ENCODE measurements at regions of chrX and their contacts with region 1.

Region 1: GRCh38 chrX:136694431-136695087 is 46.6 kb downstream of the CD40LG start:
- DNase-seq: peak; percentile 8
- ATAC-seq: peak; percentile 69
- H3K4me3 ChIP-seq: no peak overlapping the region
- H3K27ac ChIP-seq: no peak overlapping the region
- H3K4me1 ChIP-seq: no peaks in the 10 kb centered on the region
- H3K27me3 ChIP-seq: no peaks in the 10 kb centered on the region
- CTCF ChIP-seq: peak; percentile 40 to 60 (median 42); a peak in 5 of 6 replicates
- POLR2A ChIP-seq: no peak
- RAD21 ChIP-seq: peak; percentile 75

Region 2: GRCh38 chrX:136162831-136163570 is 531.6 kb before region 1 on chrX:
- CTCF ChIA-PET with region 1: no interaction called
- POLR2A ChIA-PET with region 1: no interaction called
- RAD21 ChIA-PET with region 1: no interaction called
- intact Hi-C with region 1: loop called (anchors 10 kb)
- DNase-seq: peak; percentile 23
- ATAC-seq: peak; percentile 99
- H3K4me3 ChIP-seq: no peak overlapping the region
- H3K27ac ChIP-seq: no peak overlapping the region
- H3K4me1 ChIP-seq: peaks cover 0 to 16% of the 10 kb centered on the region in 2 experiments; a peak in 1 of 4 replicates
- H3K27me3 ChIP-seq: no peaks in the 10 kb centered on the region
- CTCF ChIP-seq: peak; percentile 39 to 72 (median 54); a peak in 5 of 6 replicates
- POLR2A ChIP-seq: no peak
- RAD21 ChIP-seq: peak; percentile 64

Region 3: DNA sequence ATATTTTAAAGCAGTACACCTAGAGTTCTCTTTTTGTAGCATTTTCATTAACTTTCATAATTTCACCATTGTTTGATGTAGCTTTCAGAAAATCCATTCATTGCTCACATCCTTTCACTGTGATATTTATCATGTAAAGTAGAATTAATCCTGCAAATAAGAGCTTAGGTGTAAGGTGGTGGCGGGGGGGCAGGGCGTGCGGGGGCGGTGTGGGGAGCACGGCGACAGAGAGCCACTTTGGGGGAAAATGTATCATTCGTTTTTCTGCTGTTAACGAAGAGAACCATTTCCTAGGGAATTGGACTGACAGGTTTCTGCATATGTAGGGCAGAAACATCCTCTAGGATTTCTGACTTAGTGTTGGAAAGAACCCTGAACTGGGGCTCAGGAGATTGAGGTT is 289.4 kb before region 1 on chrX:
- CTCF ChIA-PET with region 1: no interaction called
- POLR2A ChIA-PET with region 1: no interaction called
- RAD21 ChIA-PET with region 1: no interaction called
- intact Hi-C with region 1: loop called (anchors 10 kb)
- DNase-seq: no peak
- ATAC-seq: no peak
- H3K4me3 ChIP-seq: no peak overlapping the region
- H3K27ac ChIP-seq: no peak overlapping the region
- H3K4me1 ChIP-seq: no peaks in the 10 kb centered on the region
- H3K27me3 ChIP-seq: no peaks in the 10 kb centered on the region
- CTCF ChIP-seq: no peak
- POLR2A ChIP-seq: no peak
- RAD21 ChIP-seq: no peak

Region 4: GRCh38 chrX:136608295-136609171 is 86.0 kb before region 1 on chrX:
- CTCF ChIA-PET with region 1: interaction called, 29 read pairs
- POLR2A ChIA-PET with region 1: no interaction called
- RAD21 ChIA-PET with region 1: interaction called, 3 to 6 read pairs
- intact Hi-C with region 1: loop called (anchors 1 kb)
- DNase-seq: peak; percentile 3
- ATAC-seq: peak; percentile 68
- H3K4me3 ChIP-seq: no peak overlapping the region
- H3K27ac ChIP-seq: no peak overlapping the region
- H3K4me1 ChIP-seq: no peaks in the 10 kb centered on the region
- H3K27me3 ChIP-seq: no peaks in the 10 kb centered on the region
- CTCF ChIP-seq: peak; percentile 20 to 36 (median 21); a peak in 4 of 6 replicates
- POLR2A ChIP-seq: no peak
- RAD21 ChIP-seq: peak; percentile 62

Region 5: GRCh38 chrX:136714626-136715599 is 20.4 kb after region 1 on chrX:
- CTCF ChIA-PET with region 1: no interaction called
- POLR2A ChIA-PET with region 1: no interaction called
- RAD21 ChIA-PET with region 1: no interaction called
- intact Hi-C with region 1: no loop called
- DNase-seq: no peak
- ATAC-seq: no peak
- H3K4me3 ChIP-seq: no peak overlapping the region
- H3K27ac ChIP-seq: no peak overlapping the region
- H3K4me1 ChIP-seq: no peaks in the 10 kb centered on the region
- H3K27me3 ChIP-seq: no peaks in the 10 kb centered on the region
- CTCF ChIP-seq: no peak
- POLR2A ChIP-seq: no peak
- RAD21 ChIP-seq: no peak

Region 6: GRCh38 chrX:136780763-136781162 is 86.2 kb after region 1 on chrX and contains the start of gene ARHGEF6:
- CTCF ChIA-PET with region 1: no interaction called
- POLR2A ChIA-PET with region 1: no interaction called
- RAD21 ChIA-PET with region 1: no interaction called
- intact Hi-C with region 1: no loop called
- DNase-seq: no peak
- ATAC-seq: no peak
- H3K4me3 ChIP-seq: no peak within 1 kb of the TSS
- H3K27ac ChIP-seq: no peak within 1 kb of the TSS
- H3K4me1 ChIP-seq: no peaks in the 10 kb centered on the region
- H3K27me3 ChIP-seq: no peaks in the 10 kb centered on the region
- CTCF ChIP-seq: no peak
- POLR2A ChIP-seq: no peak
- RAD21 ChIP-seq: no peak
- total RNA-seq, gene ARHGEF6: 1.9 TPM